Activated T-helper 1 cell treated with anti-CD3 and anti-CD28 coated beads, Interleukin-12 subunit alpha, Interleukin-12 subunit beta, Interleukin-2, Interleukin-4 antibody, amounts not matched to agents 30 ng/mL and 10 ng/mL and 1 ng/mL, durations not matched to agents 14 hours and 24 hours and 36 hours (primary cell): ENCODE measurements at regions of chr4 and their contacts with region 1.

Region 1: GRCh38 chr4:163484906-163485305 is 9.6 kb upstream of the TMA16 start:
- DNase-seq: peak; percentile 25
- H3K4me3 Mint-ChIP-seq: no peak overlapping the region
- H3K27ac Mint-ChIP-seq: no peak overlapping the region
- H3K4me1 Mint-ChIP-seq: peaks cover 9% of the 10 kb centered on the region
- H3K27me3 Mint-ChIP-seq: peaks cover 14% of the 10 kb centered on the region

Region 2: DNA sequence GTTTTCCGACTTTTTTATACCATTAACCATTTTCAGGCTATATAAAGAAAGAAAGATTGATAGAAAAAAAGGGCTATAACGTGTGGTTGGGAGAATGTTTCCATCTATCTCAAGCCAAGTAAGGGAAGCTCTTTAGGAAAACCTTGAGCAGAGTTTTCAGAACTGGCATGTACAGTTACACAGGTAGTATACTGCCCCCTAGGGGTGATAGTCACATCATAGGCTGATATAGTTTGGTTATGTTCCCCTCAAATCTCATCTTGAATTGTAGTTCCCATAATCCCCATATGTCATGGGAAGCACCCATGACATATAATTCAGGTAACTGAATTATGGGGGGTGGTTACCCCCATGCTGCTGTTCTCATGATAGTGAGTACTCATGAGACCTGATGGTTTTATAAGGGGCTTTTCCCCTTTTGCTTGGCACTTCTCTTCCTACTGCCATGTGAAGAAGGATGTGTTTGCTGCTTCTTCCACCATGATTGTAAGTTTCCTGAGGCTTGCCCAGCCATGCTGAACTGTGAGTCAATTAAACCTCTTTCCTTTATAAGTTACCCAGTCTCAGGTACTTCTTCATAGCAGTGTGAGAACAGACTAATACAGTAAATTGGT is 196.4 kb after region 1 on chr4:
- intact Hi-C with region 1: loop called (anchors 1 kb)
- DNase-seq: no peak
- H3K4me3 Mint-ChIP-seq: no peak overlapping the region
- H3K27ac Mint-ChIP-seq: no peak overlapping the region
- H3K4me1 Mint-ChIP-seq: no peaks in the 10 kb centered on the region
- H3K27me3 Mint-ChIP-seq: peaks cover 2% of the 10 kb centered on the region

Region 3: GRCh38 chr4:163755013-163755412 is 270.1 kb after region 1 on chr4:
- intact Hi-C with region 1: loop called (anchors 5 kb)
- DNase-seq: no peak
- H3K4me3 Mint-ChIP-seq: no peak overlapping the region
- H3K27ac Mint-ChIP-seq: no peak overlapping the region
- H3K4me1 Mint-ChIP-seq: no peaks in the 10 kb centered on the region
- H3K27me3 Mint-ChIP-seq: no peaks in the 10 kb centered on the region